ENCODE measurements at regions of chrX and their contacts with region 1.

Region 1: GRCh38 chrX:12721042-12721441 is 70.2 kb upstream of the PRPS2 start:
- DNase-seq: no peak
- H3K4me3 ChIP-seq: no peak overlapping the region
- H3K27me3 ChIP-seq: no peaks in the 10 kb centered on the region
- CTCF ChIP-seq: no peak

Region 2: GRCh38 chrX:13598877-13599276 is 877.8 kb after region 1 on chrX:
- CTCF ChIA-PET with region 1: no interaction called
- POLR2A ChIA-PET with region 1: interaction called, 10 read pairs
- DNase-seq: no peak
- H3K4me3 ChIP-seq: no peak overlapping the region
- H3K27me3 ChIP-seq: no peaks in the 10 kb centered on the region
- CTCF ChIP-seq: 0 out of 2 replicates have a peak, but pooled peaks have one; percentile 18